AG04449 (cell line): ENCODE measurements at regions of chr19 and their contacts with region 1.

Region 1: GRCh38 chr19:55146078-55146704 is 2.8 kb downstream of the TNNT1 start:
- DNase-seq: no peak
- H3K4me3 ChIP-seq: peak overlapping the region; percentile 15
- CTCF ChIP-seq: peak; percentile 60

Region 2: DNA sequence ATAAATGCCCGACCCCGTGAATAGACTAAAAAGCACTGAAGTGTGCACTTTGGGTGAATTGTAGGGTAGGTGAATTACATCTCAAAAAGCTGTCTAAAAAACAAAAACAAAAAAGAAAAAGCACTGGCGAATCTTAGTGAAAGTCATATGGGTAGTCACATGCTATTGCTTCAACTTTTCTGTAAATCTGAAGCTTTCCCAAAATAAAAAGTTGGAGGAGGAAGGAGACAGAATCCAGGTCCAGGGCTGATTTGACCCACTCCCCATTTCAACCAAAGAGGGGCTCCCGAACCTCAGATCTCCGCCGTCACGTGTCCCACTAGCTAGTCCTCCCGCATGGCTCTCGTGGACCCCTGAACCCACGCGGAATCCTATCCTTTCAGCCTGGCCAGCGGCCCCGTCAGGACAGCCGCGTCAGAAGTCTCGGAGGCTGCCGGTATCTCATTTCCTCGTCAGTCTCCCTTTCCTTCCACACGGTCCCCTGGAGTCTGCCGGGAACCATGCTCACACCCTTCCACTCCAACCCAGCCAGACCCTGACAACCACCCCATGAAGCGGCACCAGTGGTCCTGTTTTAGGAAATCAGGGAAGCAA is 34.9 kb before region 1 on chr19:
- CTCF ChIA-PET with region 1: no interaction called
- POLR2A ChIA-PET with region 1: no interaction called
- DNase-seq: no peak
- H3K4me3 ChIP-seq: no peak overlapping the region
- CTCF ChIP-seq: no peak

Region 3: GRCh38 chr19:55160128-55160985 is 14.2 kb after region 1 on chr19:
- CTCF ChIA-PET with region 1: interaction called, 29 read pairs
- POLR2A ChIA-PET with region 1: no interaction called
- DNase-seq: no peak
- H3K4me3 ChIP-seq: no peak overlapping the region
- CTCF ChIP-seq: peak; percentile 96

Region 4: GRCh38 chr19:55289117-55289796 is 143.1 kb after region 1 on chr19:
- CTCF ChIA-PET with region 1: interaction called, 18 read pairs
- POLR2A ChIA-PET with region 1: no interaction called
- DNase-seq: no peak
- H3K4me3 ChIP-seq: no peak overlapping the region
- CTCF ChIP-seq: no peak

Region 5: GRCh38 chr19:55418185-55418584 is 272.0 kb after region 1 on chr19:
- CTCF ChIA-PET with region 1: interaction called, 90 read pairs
- POLR2A ChIA-PET with region 1: no interaction called
- DNase-seq: peak; percentile 63
- H3K4me3 ChIP-seq: no peak overlapping the region
- CTCF ChIP-seq: peak; percentile 68

Region 6: DNA sequence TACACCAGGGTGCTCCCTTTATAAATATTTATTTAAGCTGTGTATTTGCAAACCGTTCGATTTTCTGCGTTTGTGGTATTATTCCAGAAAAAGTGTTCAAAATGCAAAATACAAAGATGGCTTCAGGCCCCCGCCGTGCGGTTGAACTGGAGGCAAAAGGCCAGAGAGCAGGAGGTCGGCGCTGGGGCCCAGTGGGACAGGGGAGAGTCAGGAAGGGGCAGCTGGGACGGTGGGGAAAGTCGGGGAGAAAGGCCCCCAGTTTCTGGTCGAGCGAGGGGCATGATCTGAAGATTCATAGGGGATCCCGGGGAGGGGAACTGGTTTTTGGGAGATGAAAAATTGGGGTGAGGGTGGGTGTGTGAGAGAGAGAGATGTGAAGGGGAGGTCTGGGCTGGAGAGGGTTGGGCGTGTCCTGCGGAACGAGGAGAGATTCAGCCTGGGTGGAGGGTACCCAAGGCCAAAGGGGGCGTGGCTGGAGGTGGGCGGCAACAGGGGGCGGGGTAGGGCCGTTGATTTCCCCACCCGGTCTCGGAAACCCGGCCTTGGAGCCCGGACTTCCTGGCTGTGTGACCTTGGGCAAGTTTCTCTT is 314.6 kb after region 1 on chr19:
- CTCF ChIA-PET with region 1: interaction called, 10 read pairs
- POLR2A ChIA-PET with region 1: no interaction called
- DNase-seq: no peak
- H3K4me3 ChIP-seq: peak overlapping the region; percentile 98
- CTCF ChIP-seq: no peak

Region 7: DNA sequence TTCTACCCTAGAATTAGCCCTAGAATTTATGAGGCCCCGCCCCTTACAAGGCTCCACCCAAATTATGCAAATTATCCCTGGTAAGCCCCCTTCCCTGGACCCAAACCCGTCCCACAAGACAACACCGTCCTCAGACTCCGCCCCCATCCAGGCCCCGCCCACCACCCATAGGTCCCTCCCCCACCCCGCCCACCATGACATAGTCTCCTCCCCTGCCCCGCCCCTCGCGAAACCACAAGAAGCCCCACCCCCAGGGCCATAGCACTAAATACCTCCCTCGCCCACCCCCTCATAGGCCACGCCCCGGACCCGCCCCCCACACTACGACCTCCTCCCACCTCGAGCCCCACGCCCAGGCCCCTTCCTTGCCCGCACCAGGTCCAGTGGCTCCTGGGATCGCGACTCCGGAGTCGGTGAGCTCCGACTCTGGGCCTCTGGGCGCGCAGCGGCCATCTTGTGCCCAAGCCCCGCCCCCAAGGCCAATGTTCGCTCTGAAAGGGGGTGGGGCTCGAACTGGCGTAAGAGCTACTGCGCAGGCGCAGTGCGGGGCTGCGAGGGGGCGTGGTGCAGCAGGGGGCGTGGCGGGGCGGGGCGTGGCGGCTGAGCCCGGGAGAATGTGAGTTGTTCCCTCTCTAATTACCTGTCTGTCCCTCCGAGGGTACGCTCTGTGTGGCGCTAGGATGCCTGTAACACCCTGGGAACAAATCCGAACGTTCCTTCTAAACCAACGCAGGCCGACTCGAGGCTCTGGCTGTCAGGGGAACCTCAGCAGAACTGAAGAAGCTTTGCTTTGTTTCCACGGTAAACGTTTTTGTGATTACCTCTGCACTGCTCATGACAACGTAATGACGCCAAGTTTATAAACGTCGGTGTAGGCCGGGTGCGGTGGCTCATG is 478.2 kb after region 1 on chr19 and contains the start of gene ZNF784:
- CTCF ChIA-PET with region 1: interaction called, 19 read pairs
- POLR2A ChIA-PET with region 1: no interaction called
- DNase-seq: no peak
- H3K4me3 ChIP-seq: peak within 1 kb of the TSS; percentile 78
- CTCF ChIP-seq: no peak